ENCODE measurements at regions of chr11 and their contacts with region 1.

Region 1: GRCh38 chr11:62427630-62428233 is 8.9 kb downstream of the SCGB1A1 start:
- DNase-seq: no peak
- ATAC-seq: no peak
- H3K4me3 ChIP-seq: no peak overlapping the region
- H3K27ac ChIP-seq: no peak overlapping the region
- H3K4me1 ChIP-seq: peaks cover 3% of the 10 kb centered on the region
- H3K27me3 ChIP-seq: no peaks in the 10 kb centered on the region

Region 2: DNA sequence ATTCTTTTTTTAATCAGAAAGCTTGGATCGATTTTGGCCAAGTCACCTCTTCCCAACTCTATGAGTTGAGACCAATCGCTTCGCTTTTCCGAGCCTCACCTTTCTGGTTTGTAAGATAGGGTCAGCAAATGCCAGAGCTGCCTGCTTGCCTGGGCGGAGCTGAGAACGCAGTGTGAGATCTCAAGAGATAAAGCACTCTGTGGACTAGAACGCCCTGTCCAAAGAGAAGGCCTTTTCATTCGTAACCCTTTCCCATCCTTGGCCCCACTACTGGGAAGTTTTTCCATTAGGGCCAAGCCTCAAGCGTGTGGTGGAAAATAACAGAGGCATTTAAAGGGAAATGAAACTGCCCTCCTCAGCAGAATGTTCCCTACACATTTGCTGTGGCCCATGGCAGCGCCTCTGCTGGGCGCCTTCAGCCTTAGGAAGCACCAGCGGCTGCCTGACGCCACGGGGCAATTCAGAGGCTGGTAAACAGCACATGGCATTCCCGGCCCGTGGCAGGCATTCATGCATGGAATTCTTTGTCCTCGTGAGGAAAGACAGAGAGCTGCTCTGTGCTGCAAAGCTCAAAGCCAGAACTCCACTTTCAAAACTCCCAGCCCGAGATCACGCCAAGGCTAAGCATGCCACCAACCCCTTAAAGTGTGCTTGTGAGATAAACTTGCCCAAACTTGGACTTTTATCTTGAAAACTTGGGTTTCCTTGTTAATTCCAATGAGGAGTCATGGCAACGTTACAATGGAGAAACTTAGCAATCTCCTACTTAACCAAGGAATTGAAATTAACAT is 80.7 kb after region 1 on chr11:
- intact Hi-C with region 1: loop called in 1 of 4 experiments (anchors 10 kb)
- DNase-seq: peak; percentile 73 to 92 (median 90)
- ATAC-seq: peak; percentile 87 to 88
- H3K4me3 ChIP-seq: no peak overlapping the region
- H3K27ac ChIP-seq: peak overlapping the region; percentile 85
- H3K4me1 ChIP-seq: peaks cover 11% of the 10 kb centered on the region
- H3K27me3 ChIP-seq: no peaks in the 10 kb centered on the region

Region 3: GRCh38 chr11:62556108-62556871 is 128.6 kb after region 1 on chr11:
- intact Hi-C with region 1: loop called in 2 of 4 experiments (anchors 2 to 10 kb)
- DNase-seq: peak; percentile 93 to 95 (median 95)
- ATAC-seq: peak; percentile 77 to 82
- H3K4me3 ChIP-seq: no peak overlapping the region
- H3K27ac ChIP-seq: peak overlapping the region; percentile 83
- H3K4me1 ChIP-seq: peaks cover 48% of the 10 kb centered on the region
- H3K27me3 ChIP-seq: no peaks in the 10 kb centered on the region

Measured in right cardiac atrium (tissue), 5 donors.